Gastrocnemius medialis (tissue), 4 donors: ENCODE measurements at regions of chr18 and their contacts with region 1.

Region 1: GRCh38 chr18:71471963-71472725 is 1072.0 kb downstream of the CBLN2 start:
- DNase-seq: no peak
- ATAC-seq: no peak
- H3K4me3 ChIP-seq: no peak overlapping the region
- H3K27ac ChIP-seq: no peak overlapping the region
- H3K4me1 ChIP-seq: no peaks in the 10 kb centered on the region
- H3K27me3 ChIP-seq: no peaks in the 10 kb centered on the region
- CTCF ChIP-seq: no peak
- POLR2A ChIP-seq: no peak

Region 2: DNA sequence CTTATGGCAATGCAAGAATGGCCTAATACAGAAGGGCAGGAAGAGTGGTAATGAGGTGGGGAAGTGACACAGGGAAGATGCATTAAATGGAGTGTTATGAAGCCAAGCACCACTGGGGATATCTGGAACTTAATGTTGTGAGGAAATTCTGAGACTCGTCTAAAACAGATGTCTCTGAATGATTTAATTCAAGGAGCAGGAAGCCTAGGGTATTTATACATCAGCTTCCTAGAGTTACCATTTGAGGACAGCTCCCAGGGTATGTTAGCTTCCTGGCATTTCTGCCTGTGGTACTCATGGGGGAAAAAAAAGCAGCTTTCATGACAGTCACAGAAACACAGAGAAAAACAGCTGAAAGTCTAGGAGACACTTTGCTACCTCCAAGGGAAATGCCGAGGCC is 82.5 kb after region 1 on chr18:
- in situ Hi-C with region 1: loop called in 1 of 4 experiments (anchors 25 kb)
- intact Hi-C with region 1: no loop called
- DNase-seq: no peak
- ATAC-seq: no peak
- H3K4me3 ChIP-seq: no peak overlapping the region
- H3K27ac ChIP-seq: no peak overlapping the region
- H3K4me1 ChIP-seq: no peaks in the 10 kb centered on the region
- H3K27me3 ChIP-seq: no peaks in the 10 kb centered on the region
- CTCF ChIP-seq: no peak
- POLR2A ChIP-seq: no peak